Activated CD4-positive, alpha-beta T cell treated with anti-CD3 and anti-CD28 coated beads for 36 hours (primary cell): ENCODE measurements at regions of chr15 and their contacts with region 1.

Region 1: DNA sequence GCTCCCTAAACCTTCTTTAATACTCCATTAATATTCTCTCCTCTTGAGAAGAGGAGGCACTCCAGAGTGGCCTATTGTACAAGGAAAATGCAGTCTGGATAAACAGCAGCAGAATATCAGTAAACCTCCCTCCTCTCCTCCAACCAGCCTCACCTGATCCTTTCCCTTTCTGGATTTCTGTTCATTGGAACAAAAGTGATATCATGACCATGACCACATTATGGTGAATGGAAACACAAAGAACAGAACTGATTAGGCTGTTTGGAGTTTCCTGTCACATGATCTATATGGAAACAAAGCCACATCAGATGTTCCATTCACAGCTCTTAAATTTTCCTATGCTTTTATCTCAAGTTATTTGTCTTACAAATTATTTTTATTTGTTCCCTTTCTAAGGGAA is 14.6 kb downstream of the C2CD4B start:
- DNase-seq: no peak
- ATAC-seq: peak; percentile 41
- H3K4me3 Mint-ChIP-seq: no peak overlapping the region
- H3K27ac Mint-ChIP-seq: peak overlapping the region; percentile 17
- H3K4me1 Mint-ChIP-seq: peaks cover 35% of the 10 kb centered on the region
- H3K27me3 Mint-ChIP-seq: peaks cover 8% of the 10 kb centered on the region

Region 2: DNA sequence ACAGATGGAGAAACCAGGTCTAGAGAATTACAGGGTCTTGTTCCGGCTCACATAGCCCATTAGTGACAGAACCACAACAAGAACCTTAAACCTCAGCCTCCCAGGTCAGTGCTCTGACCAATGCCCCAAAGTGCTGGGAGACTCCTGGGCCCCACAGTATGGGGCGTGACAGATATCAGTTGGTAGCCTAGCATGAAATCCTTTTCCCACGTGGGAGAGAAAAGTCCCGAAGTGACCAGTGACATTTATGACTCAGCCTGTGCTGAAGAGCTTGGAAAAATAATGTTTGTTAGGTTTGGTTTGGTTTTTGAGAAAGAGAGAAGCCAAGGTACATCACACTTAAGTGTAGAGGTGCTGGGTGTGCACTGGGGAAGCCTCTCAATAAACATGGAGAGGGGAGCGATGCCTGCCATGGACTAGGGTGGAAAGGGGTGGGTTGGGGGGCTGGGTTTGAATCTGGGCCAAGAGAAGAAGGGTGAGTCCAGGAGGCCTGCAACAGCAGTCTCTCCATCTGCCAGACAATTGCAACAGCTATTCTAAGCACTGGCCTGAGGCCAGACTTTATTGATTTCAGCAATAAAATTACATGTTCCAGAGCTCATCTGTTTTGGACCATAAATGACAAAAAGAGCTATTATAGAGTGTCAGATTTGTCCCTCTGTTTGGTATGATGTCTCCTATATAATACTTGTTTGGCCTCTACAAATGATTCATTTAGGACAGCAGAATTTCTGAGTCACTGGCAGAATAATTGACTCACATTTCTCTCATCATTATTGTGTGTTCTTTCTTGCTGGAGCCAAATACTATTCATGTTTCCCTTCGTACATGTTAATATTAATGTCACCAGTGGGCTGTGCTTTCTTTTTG is 40.2 kb before region 1 on chr15:
- CTCF ChIA-PET with region 1: interaction called, 3 read pairs
- POLR2A ChIA-PET with region 1: no interaction called
- intact Hi-C with region 1: loop called (anchors 2 to 5 kb)
- DNase-seq: no peak
- ATAC-seq: peak; percentile 91
- H3K4me3 Mint-ChIP-seq: no peak overlapping the region
- H3K27ac Mint-ChIP-seq: peak overlapping the region; percentile 73
- H3K4me1 Mint-ChIP-seq: peaks cover 16% of the 10 kb centered on the region
- H3K27me3 Mint-ChIP-seq: peaks cover 4% of the 10 kb centered on the region

Region 3: GRCh38 chr15:62119227-62119864 is 31.1 kb before region 1 on chr15:
- CTCF ChIA-PET with region 1: interaction called, 6 read pairs
- POLR2A ChIA-PET with region 1: no interaction called
- intact Hi-C with region 1: loop called (anchors 1 to 5 kb)
- DNase-seq: peak; percentile 46
- ATAC-seq: peak; percentile 99
- H3K4me3 Mint-ChIP-seq: peak overlapping the region; percentile 17
- H3K27ac Mint-ChIP-seq: peak overlapping the region; percentile 94
- H3K4me1 Mint-ChIP-seq: peaks cover 48% of the 10 kb centered on the region
- H3K27me3 Mint-ChIP-seq: no peaks in the 10 kb centered on the region